ENCODE measurements at regions of chr10 and their contacts with region 1.

Region 1: GRCh38 chr10:71209352-71209715 is 3.0 kb upstream of the UNC5B start:
- DNase-seq: no peak
- H3K4me3 Mint-ChIP-seq: no peak overlapping the region
- H3K27ac Mint-ChIP-seq: no peak overlapping the region
- H3K4me1 Mint-ChIP-seq: no peaks in the 10 kb centered on the region
- H3K27me3 Mint-ChIP-seq: peaks cover 58% of the 10 kb centered on the region

Region 2: DNA sequence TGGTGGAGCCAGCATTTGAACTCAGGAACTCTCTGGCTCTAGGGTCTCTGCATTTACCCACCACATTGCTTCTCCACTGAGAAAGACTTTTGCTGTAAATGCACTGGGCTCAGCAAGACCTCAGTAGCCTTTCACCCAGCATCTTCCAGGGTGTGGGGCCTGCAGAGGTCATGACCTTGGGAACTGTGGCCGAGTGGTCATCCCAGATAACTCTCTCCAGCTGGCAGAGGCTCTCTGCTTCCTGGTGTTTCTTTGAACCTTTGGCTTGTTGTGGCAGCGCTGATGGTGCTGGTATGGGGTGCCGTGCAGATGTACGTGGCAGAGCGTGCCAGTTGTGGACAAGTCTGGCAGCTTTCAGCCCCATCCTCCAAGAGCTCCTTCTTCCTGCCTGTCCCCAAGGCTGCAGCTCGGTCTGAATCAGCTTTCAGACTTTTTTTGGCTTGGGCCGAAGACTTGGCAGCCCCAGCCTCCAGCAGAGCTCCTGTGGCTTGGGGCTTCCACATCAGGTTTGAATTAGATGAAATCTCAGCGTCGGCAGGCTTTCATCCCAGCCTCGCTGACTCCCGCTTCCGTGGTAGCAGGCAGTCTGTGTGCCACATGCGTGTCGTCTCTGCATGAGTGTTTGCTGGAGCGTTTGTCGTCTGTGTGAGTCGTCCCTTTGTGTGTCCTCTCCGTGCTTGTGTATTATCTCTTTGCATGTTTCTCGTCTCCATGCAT is 515.6 kb before region 1 on chr10:
- intact Hi-C with region 1: loop called (anchors 5 kb)
- DNase-seq: no peak
- H3K4me3 Mint-ChIP-seq: no peak overlapping the region
- H3K27ac Mint-ChIP-seq: no peak overlapping the region
- H3K4me1 Mint-ChIP-seq: no peaks in the 10 kb centered on the region
- H3K27me3 Mint-ChIP-seq: no peaks in the 10 kb centered on the region

Region 3: GRCh38 chr10:70925377-70926225 is 283.7 kb before region 1 on chr10:
- intact Hi-C with region 1: loop called (anchors 1 kb)
- DNase-seq: peak; percentile 32
- H3K4me3 Mint-ChIP-seq: no peak overlapping the region
- H3K27ac Mint-ChIP-seq: no peak overlapping the region
- H3K4me1 Mint-ChIP-seq: peaks cover 3% of the 10 kb centered on the region
- H3K27me3 Mint-ChIP-seq: peaks cover 5% of the 10 kb centered on the region

Measured in activated T-helper 2 cell treated with anti-CD3 and anti-CD28 coated beads, Interferon-gamma antibody, Interleukin-2, Interleukin-4, amounts not matched to agents 10 μg/mL and 5 μg/mL and 100 μg/mL, durations not matched to agents 14 hours and 24 hours and 36 hours (primary cell).